ENCODE measurements at regions of chr3 and their contacts with region 1.

Region 1: GRCh38 chr3:46619845-46620778 is 7.8 kb downstream of the FAM240A start:
- DNase-seq: peak in 1 of 2 experiments; percentile 43
- H3K4me3 ChIP-seq: no peak overlapping the region
- H3K27ac ChIP-seq: no peak overlapping the region
- H3K4me1 ChIP-seq: peaks cover 0 to 7% (median 3%) of the 10 kb centered on the region in 4 experiments; a peak in 3 of 7 replicates
- H3K27me3 ChIP-seq: no peaks in the 10 kb centered on the region
- CTCF ChIP-seq: no peak
- EP300 ChIP-seq: no peak
- POLR2A ChIP-seq: no peak
- RAD21 ChIP-seq: no peak

Region 2: GRCh38 chr3:46538803-46539442 is 81.2 kb before region 1 on chr3:
- CTCF ChIA-PET with region 1: no interaction called
- POLR2A ChIA-PET with region 1: no interaction called
- DNase-seq: no peak
- H3K4me3 ChIP-seq: no peak overlapping the region
- H3K27ac ChIP-seq: no peak overlapping the region
- H3K4me1 ChIP-seq: peaks cover 1 to 5% (median 4%) of the 10 kb centered on the region in 4 experiments; a peak in 5 of 7 replicates
- H3K27me3 ChIP-seq: no peaks in the 10 kb centered on the region
- CTCF ChIP-seq: no peak
- EP300 ChIP-seq: no peak
- POLR2A ChIP-seq: no peak
- RAD21 ChIP-seq: no peak

Region 3: GRCh38 chr3:46607603-46608028 is 12.5 kb before region 1 on chr3:
- CTCF ChIA-PET with region 1: interaction called, 12 read pairs
- POLR2A ChIA-PET with region 1: interaction called, 5 read pairs
- DNase-seq: peak in 1 of 2 experiments; percentile 58
- H3K4me3 ChIP-seq: no peak overlapping the region
- H3K27ac ChIP-seq: no peak overlapping the region
- H3K4me1 ChIP-seq: peaks cover 3 to 23% (median 9%) of the 10 kb centered on the region in 4 experiments
- H3K27me3 ChIP-seq: no peaks in the 10 kb centered on the region
- CTCF ChIP-seq: peak; percentile 31 to 72 (median 68)
- EP300 ChIP-seq: no peak
- POLR2A ChIP-seq: no peak
- RAD21 ChIP-seq: peak; percentile 49 to 68

Region 4: DNA sequence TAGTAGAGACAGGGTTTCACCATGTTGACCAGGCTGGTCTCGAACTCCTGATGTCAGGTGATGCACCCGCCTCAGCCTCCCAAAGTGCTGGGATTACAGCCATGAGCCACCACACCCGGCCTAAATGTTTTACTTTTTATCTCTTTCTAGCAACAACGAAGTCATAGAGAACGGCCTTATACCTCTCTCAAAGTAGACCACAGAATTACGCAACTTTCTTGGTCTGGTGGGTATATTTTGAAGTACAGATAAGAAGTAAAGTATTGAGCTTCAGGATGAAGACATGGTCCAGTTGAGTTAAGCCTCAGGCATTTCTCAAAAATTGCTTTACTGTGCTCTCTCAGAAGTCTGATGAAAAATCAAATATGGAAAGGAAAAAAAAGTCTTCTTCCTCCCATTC is 22.9 kb after region 1 on chr3:
- CTCF ChIA-PET with region 1: no interaction called
- POLR2A ChIA-PET with region 1: no interaction called
- DNase-seq: no peak
- H3K4me3 ChIP-seq: no peak overlapping the region
- H3K27ac ChIP-seq: no peak overlapping the region
- H3K4me1 ChIP-seq: no peaks in the 10 kb centered on the region
- H3K27me3 ChIP-seq: no peaks in the 10 kb centered on the region
- CTCF ChIP-seq: no peak
- EP300 ChIP-seq: no peak
- POLR2A ChIP-seq: no peak
- RAD21 ChIP-seq: no peak